Activated CD4-positive, alpha-beta T cell treated with anti-CD3 and anti-CD28 coated beads, Interleukin-2, amount 10 ng/mL, durations not matched to agents 24 days and 14 days (primary cell): ENCODE measurements at regions of chr6 and their contacts with region 1.

Region 1: GRCh38 chr6:11653028-11653583 is 115.6 kb downstream of the TMEM170B start:
- DNase-seq: peak; percentile 85
- H3K4me3 Mint-ChIP-seq: peak overlapping the region; percentile 3
- H3K27ac Mint-ChIP-seq: peak overlapping the region; percentile 52
- H3K4me1 Mint-ChIP-seq: peaks cover 13% of the 10 kb centered on the region
- H3K27me3 Mint-ChIP-seq: peaks cover 6% of the 10 kb centered on the region

Region 2: DNA sequence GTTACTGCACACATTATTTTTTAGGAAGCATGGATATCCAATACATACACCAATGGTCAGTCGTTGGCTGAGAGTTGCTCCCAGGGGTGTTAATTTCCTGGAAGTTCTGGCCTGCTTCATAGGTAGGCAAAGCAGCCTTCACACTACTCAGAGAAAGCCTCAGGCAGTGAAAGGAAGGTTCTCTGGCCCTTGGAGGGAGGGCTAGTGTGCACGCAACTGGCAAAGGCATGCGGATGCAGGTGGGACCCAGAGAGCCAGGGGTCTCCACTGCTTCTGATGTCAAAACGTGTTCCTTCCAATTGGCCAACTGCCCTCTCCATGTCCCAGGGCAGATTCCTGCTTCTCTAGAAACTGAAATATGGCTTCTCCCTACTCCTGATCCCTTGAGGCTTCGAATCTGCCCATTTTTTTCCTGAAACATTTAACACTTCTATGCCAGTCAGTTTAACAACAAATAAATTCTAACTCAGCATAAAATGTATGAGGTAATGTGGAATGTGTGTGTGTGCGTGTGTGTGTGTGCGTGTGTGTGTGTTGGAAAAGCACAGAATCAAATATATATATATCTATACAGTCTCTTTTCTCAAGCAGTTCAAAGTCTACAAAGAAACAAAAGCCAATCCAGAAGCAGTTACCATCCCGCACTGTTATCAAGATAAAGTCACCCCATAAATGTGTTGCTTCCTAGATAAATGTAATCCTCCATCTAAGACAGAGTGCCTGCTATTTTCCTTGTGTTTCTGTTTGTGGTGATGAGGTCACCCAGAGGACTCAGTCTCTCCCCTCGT is 265.0 kb after region 1 on chr6:
- intact Hi-C with region 1: loop called (anchors 10 kb)
- DNase-seq: peak; percentile 47
- H3K4me3 Mint-ChIP-seq: no peak overlapping the region
- H3K27ac Mint-ChIP-seq: no peak overlapping the region
- H3K4me1 Mint-ChIP-seq: peaks cover 4% of the 10 kb centered on the region
- H3K27me3 Mint-ChIP-seq: no peaks in the 10 kb centered on the region

Region 3: DNA sequence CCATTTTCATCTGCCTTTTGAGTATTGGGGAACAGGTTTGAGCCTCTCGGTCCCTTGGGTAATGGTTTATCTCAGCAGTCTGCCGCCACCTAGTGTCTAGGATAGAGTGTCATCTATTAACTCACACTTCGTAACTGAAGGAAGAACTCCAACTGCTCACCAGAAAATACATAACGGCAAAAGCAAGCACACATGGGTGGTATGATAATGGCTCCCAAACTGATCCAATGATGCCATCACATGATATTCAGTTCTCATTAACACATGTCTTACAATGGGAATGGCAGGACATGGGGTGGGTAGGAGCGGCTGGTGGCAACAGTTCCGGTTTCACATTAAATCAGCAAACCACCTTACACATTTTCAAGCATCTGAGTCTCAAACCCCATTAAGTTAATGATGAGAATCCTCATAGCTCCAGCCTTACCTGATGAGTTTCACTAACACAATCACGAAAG is 952.8 kb after region 1 on chr6:
- intact Hi-C with region 1: loop called (anchors 2 kb)
- DNase-seq: peak; percentile 84
- H3K4me3 Mint-ChIP-seq: peak overlapping the region; percentile 39
- H3K27ac Mint-ChIP-seq: no peak overlapping the region
- H3K4me1 Mint-ChIP-seq: peaks cover 13% of the 10 kb centered on the region
- H3K27me3 Mint-ChIP-seq: peaks cover 7% of the 10 kb centered on the region